ENCODE measurements at regions of chr2 and their contacts with region 1.

Region 1: DNA sequence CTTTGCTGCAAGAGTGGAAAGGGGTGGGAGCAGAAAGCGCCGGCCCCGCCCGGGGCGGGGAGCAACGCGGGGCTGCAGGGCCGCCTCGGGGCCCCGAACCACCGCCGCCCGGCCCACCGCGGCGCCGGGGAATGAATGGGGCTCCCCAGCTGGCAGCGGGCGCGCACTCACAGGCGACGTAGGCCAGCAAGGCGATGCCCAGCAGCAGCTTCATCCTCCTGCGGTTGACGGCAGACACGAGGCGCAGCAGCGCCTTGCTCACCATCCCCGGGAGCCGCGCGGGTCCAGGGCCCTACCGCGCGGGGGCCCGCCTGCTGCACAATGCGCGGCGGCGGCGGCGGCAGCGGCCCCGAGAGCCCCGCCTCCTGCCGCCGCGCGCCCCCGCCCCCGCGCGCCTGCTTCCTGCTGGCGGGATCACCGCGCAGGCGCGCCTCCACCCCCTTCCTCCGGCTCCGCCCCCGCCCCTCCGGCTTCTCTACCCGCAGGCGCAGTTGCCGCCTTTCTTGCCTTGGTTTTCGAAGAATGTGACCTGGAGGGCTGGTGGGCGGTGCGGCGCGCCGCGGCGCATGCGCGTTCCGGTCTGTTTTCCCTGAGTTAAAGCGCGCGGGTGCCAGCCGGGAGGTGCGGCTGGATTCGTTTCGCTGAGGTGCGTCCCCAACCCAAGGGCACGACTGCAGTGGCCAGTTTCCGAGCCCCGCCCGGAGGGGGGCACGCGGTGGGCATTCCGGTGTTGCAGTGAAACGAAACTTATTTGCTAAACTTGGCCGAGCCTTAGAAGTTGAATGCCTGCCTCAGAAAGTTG is at the start of gene UXS1:
- DNase-seq: peak; percentile 99
- ATAC-seq: peak; percentile 95
- total RNA-seq, gene UXS1: 27.4 TPM

Region 2: DNA sequence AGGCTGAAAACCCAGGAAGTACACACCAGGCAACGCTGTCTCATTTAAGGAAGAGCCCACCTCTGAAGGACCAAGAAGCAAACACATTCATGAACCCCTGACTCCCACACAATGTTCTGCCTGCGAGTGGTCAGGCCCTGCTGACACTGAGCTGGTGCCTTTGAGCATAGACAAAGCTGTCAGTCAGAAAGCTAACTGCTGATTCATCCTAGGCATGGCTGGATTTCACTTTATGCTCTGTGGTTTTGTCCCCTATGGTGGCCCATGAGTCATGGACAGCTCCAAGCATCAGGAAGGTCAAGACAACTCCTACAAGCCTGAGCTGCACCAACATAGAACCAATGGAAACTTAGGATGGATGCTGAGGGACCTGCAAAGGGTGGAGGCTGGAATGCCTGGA is 78.9 kb before region 1 on chr2:
- intact Hi-C with region 1: loop called (anchors 5 kb)
- DNase-seq: no peak
- ATAC-seq: no peak

Region 3: DNA sequence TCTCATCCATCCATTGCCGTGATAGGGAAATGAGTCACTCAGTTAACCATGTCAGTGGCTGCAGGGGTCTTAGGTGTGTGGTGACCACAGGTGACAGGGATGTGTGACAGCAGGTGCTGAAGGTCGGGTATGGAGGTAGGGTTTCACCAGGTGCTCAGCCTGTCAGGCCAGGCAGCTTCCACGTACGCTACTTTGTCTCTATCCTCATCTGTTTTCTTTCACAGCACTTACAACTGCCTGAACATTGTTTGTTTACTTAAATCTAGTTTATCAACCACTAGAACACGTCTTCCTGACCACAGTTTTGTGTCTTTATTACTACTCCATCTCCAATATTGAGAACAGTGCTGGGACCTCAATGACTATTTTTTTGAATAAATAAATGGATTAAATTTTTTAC is 11.3 kb after region 1 on chr2:
- intact Hi-C with region 1: no loop called
- DNase-seq: no peak
- ATAC-seq: no peak